A549 (cell line): ENCODE measurements at regions of chr12 and their contacts with region 1.

Region 1: DNA sequence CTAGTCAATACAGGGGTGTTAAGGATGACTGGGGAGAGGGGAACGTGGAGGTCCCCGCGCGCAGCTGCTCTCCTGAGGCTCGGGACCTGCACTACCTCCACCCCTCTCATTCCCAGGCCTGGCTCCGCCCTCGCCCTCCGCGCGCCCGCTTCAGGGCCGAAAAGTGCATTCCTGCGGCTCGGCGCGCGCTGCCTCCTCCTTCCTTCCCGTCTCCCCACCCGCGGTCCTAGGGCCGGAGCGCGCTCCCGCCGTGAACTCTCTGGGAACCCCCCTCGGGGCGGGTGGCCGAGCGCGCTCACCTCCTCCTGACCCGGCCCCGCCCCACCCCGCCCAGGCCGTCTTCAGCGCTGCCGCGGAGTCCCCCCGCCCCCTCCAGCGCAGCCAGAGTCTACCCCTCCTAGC is 11.2 kb downstream of the RARG start:
- DNase-seq: peak; percentile 97 to 98
- ATAC-seq: peak; percentile 74 to 86
- H3K4me3 ChIP-seq: peak overlapping the region; percentile 61
- H3K27ac ChIP-seq: peak overlapping the region; percentile 98
- H3K4me1 ChIP-seq: peaks cover 63% of the 10 kb centered on the region
- CTCF ChIP-seq: no peak
- EP300 ChIP-seq: no peak
- POLR2A ChIP-seq: peak; percentile 42
- RAD21 ChIP-seq: peak in 1 of 2 experiments; percentile 14; a peak in 1 of 5 replicates

Region 2: DNA sequence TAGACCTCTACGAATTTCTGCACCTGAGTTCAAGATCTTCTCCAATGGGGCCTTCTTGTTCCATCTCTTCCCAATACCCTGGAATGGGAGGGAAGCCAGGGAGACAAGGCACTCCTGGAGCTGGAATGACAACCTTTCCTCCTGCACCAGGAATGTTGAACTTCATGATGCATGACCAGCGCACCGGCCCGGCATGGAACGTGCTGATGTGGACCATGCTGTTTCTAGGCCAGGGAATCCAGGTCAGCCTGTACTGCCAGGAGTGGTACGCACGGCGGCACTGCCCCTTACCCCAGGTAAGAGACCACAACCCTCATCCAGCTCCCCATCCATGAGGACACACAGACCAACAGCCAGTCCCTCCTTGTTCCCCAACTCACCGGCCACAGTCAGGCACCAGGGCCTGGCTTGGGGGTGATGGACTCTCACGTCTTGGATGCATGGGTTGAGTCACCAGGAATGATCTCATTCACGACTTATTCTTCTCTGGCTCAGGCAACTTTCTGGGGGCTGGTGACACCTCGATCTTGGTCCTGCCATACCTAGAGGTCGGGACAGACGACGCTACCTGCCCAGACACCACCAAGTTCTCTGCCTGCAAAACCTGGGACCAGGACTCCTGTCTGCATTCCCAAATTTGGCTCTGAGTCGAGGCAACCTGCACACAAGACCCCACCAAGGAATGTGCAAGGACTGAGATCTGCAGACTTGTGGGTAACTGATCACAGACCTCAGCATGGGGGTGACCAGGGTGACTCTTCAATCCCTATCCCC is 97.0 kb before region 1 on chr12:
- CTCF ChIA-PET with region 1: no interaction called
- POLR2A ChIA-PET with region 1: no interaction called
- DNase-seq: peak in 1 of 2 experiments; percentile 45
- ATAC-seq: peak; percentile 58 to 63; a peak in 5 of 6 replicates
- H3K4me3 ChIP-seq: no peak overlapping the region
- H3K27ac ChIP-seq: no peak overlapping the region
- H3K4me1 ChIP-seq: peaks cover 11% of the 10 kb centered on the region; the same call in 2 of the 3 replicates
- CTCF ChIP-seq: no peak
- EP300 ChIP-seq: no peak
- POLR2A ChIP-seq: no peak
- RAD21 ChIP-seq: no peak

Region 3: GRCh38 chr12:53180220-53180930 is 40.4 kb before region 1 on chr12 and contains the starts of genes CSAD and ZNF740:
- CTCF ChIA-PET with region 1: no interaction called
- POLR2A ChIA-PET with region 1: interaction called, 14 read pairs
- DNase-seq: peak; percentile 98 to 99
- ATAC-seq: peak; percentile 97 to 98
- H3K4me3 ChIP-seq: peak within 1 kb of the TSS; percentile 76
- H3K27ac ChIP-seq: peak within 1 kb of the TSS; percentile 92 to 93
- H3K4me1 ChIP-seq: peaks cover 39% of the 10 kb centered on the region
- CTCF ChIP-seq: no peak
- EP300 ChIP-seq: no peak; a peak in 1 of 5 replicates
- POLR2A ChIP-seq: peak; percentile 90
- RAD21 ChIP-seq: 0 out of 5 replicates have a peak, but pooled peaks of 1 of the 2 experiments have one; percentile 14
- polyA plus RNA-seq, gene CSAD: 16.5 and 19.2 TPM in 2 replicates
- polyA plus RNA-seq, gene ZNF740: 28.8 and 32.9 TPM in 2 replicates

Region 4: DNA sequence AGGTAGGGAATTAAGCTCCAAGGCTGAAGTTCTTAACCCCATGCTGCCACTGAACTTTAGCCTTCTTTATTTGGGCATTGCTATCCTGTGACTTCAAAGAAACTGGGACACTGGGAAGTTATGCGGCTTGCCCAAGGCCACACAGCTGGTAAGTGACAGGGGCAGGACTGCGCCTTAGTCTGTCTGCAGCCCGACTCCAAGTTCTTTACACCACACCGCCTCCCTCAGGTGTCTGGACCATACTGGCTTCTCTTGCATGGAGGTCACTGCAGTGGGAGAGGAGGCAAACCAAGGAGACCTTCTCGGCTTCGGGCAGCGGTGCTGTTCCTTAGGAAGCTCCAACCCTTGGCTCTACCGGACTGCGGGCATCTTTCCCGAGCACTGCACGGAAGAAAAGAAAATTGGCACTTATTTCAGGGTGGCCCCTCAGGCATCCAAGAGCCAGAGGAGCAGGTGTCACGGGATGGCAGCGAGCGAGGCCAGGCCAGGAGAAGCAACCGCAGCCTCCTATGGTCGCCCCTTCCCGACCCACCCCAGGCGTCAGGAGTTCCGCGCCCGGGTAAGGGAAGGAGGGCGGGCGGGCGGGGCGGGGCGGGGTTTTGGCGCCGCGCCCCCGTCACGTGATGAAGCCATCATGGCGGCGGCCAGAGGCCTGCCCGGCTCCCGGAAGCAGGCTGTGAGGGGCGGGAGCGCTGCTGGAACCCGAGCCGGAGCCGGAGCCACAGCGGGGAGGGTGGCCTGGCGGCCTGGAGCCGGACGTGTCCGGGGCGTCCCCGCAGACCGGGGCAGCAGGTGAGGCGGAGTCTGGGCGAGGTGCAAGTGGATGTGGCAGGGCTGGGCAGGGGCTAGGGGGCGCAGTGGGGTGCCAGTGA is 30.9 kb after region 1 on chr12:
- CTCF ChIA-PET with region 1: interaction called, 216 read pairs
- POLR2A ChIA-PET with region 1: interaction called, 15 read pairs
- DNase-seq: peak; percentile 83 to 87
- ATAC-seq: peak; percentile 90 to 92
- H3K4me3 ChIP-seq: peak overlapping the region; percentile 90
- H3K27ac ChIP-seq: peak overlapping the region; percentile 91 to 94
- H3K4me1 ChIP-seq: peaks cover 16% of the 10 kb centered on the region
- CTCF ChIP-seq: peak; percentile 47
- EP300 ChIP-seq: no peak
- POLR2A ChIP-seq: peak; percentile 92
- RAD21 ChIP-seq: peak; percentile 64 to 69

Region 5: DNA sequence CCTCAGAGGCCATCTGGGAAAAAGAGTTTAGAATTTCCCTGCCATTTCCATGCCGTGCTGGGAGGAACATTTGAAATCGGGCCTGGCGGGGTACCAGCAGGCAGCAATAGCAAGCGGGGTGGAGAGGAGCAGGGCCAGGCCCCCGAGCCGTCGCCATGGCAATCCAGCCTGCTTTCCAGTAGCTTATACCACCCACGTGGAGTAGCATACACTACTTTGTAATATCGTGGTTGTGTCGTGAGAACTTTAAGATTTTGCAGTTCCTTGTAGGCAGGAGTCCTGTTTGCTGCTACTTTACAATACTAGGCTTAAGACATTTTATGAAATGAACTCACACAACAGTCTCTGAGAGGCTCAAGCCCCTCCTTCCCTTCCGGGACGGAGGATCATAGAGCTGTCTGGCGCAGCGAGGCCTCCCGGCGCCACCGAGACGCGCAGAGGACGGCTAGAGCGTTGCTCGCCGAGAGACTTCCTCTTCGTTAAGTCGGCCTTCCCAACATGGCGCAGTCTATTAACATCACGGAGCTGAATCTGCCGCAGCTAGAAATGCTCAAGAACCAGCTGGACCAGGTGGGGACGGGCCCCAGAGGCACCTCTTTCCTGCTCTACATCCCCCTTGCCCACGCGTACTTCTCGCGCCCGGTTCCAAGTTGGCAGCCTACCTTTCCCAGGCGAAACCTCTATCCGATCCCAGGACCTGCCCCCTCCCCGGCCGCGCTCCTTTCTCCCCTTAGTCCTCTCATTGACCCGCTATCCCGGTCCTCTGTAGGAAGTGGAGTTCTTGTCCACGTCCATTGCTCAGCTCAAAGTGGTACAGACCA is 74.5 kb after region 1 on chr12 and contains the start of gene PFDN5:
- CTCF ChIA-PET with region 1: interaction called, 1,046 read pairs
- POLR2A ChIA-PET with region 1: interaction called, 5 read pairs
- DNase-seq: peak; percentile 88 to 96
- ATAC-seq: peak; percentile 83 to 88
- H3K4me3 ChIP-seq: peak within 1 kb of the TSS; percentile 75
- H3K27ac ChIP-seq: peak within 1 kb of the TSS; percentile 85 to 92
- H3K4me1 ChIP-seq: peaks cover 34% of the 10 kb centered on the region
- CTCF ChIP-seq: no peak
- EP300 ChIP-seq: no peak
- POLR2A ChIP-seq: peak; percentile 79
- RAD21 ChIP-seq: no peak
- polyA plus RNA-seq, gene PFDN5: 729 and 848 TPM in 2 replicates